Transverse colon (tissue), 4 donors: ENCODE measurements at regions of chr16 and their contacts with region 1.

Region 1: GRCh38 chr16:25126820-25127232 is 15.3 kb downstream of the LCMT1 start:
- DNase-seq: peak; percentile 76
- H3K4me3 ChIP-seq: no peak overlapping the region
- H3K27ac ChIP-seq: peak overlapping the region; percentile 20 to 48 (median 39)
- H3K4me1 ChIP-seq: peaks cover 4 to 12% (median 11%) of the 10 kb centered on the region in 4 donors
- H3K27me3 ChIP-seq: no peaks in the 10 kb centered on the region
- CTCF ChIP-seq: peak; percentile 51 to 87 (median 66)
- EP300 ChIP-seq: no peak
- POLR2A ChIP-seq: no peak

Region 2: GRCh38 chr16:25051406-25052150 is 75.2 kb before region 1 on chr16:
- in situ Hi-C with region 1: loop called in 2 of 4 experiments (anchors 5 to 10 kb)
- intact Hi-C with region 1: loop called (anchors 1 kb)
- DNase-seq: no peak
- H3K4me3 ChIP-seq: no peak overlapping the region
- H3K27ac ChIP-seq: peak overlapping the region; percentile 27 to 47 (median 36)
- H3K4me1 ChIP-seq: peaks cover 5 to 34% (median 19%) of the 10 kb centered on the region in 4 donors
- H3K27me3 ChIP-seq: no peaks in the 10 kb centered on the region
- CTCF ChIP-seq: no peak
- EP300 ChIP-seq: no peak
- POLR2A ChIP-seq: no peak